ENCODE measurements at regions of chr2 and their contacts with region 1.

Region 1: DNA sequence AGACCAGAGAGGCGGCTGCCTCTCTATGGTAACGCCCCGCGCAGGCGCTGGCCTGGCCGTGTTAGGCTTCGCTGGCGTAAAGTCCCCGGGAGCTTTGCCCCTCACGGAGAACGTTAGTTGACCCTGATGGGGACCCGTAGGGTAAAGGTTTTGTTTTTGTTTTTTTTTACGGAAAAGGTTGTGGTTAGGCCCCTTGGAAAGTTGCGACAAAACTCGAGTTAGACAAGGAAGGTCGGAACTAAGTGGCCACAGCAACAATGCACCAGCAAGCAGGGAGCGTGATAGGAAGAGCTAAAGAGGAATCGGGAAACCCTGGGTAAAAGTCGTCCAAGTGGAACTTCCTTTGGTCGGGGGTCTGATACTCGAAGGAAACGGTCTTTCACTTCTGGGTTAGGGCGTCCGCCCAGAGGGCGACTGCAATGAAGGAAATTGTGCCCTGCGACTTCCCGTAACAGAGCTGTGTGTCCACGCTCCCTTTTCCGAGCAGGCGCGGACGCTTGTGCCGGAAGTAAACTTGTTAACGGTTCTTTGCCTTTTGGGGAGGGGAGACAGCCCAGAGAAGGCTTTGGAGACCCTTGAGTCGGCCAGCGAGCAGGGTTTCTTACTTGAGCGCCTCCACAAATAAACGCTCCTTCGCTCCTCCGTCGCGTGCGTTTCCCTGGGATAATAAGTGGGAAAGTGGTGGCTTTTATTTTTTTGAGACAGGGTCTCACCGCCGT is 493 bp upstream of the CLASP1 start:
- DNase-seq: peak; percentile 98
- CTCF ChIP-seq: no peak

Region 2: GRCh38 chr2:121596221-121597080 is 53.3 kb before region 1 on chr2:
- CTCF ChIA-PET with region 1: interaction called, 11 read pairs
- POLR2A ChIA-PET with region 1: interaction called, 4 read pairs
- DNase-seq: peak; percentile 46
- CTCF ChIP-seq: peak; percentile 48

Region 3: GRCh38 chr2:121608367-121608766 is 41.4 kb before region 1 on chr2:
- CTCF ChIA-PET with region 1: no interaction called
- POLR2A ChIA-PET with region 1: no interaction called
- DNase-seq: no peak
- CTCF ChIP-seq: no peak

Measured in GM10248 (cell line).